ENCODE measurements at regions of chr12 and their contacts with region 1.

Region 1: GRCh38 chr12:69359531-69360347 is at the start of gene YEATS4:
- DNase-seq: peak; percentile 94
- ATAC-seq: peak; percentile 88
- H3K4me3 Mint-ChIP-seq: peak within 1 kb of the TSS; percentile 95
- H3K27ac Mint-ChIP-seq: peak within 1 kb of the TSS; percentile 92
- H3K4me1 Mint-ChIP-seq: peaks cover 33% of the 10 kb centered on the region
- H3K27me3 Mint-ChIP-seq: peaks cover 5% of the 10 kb centered on the region
- total RNA-seq, gene YEATS4: 49.9 to 51.0 TPM

Region 2: DNA sequence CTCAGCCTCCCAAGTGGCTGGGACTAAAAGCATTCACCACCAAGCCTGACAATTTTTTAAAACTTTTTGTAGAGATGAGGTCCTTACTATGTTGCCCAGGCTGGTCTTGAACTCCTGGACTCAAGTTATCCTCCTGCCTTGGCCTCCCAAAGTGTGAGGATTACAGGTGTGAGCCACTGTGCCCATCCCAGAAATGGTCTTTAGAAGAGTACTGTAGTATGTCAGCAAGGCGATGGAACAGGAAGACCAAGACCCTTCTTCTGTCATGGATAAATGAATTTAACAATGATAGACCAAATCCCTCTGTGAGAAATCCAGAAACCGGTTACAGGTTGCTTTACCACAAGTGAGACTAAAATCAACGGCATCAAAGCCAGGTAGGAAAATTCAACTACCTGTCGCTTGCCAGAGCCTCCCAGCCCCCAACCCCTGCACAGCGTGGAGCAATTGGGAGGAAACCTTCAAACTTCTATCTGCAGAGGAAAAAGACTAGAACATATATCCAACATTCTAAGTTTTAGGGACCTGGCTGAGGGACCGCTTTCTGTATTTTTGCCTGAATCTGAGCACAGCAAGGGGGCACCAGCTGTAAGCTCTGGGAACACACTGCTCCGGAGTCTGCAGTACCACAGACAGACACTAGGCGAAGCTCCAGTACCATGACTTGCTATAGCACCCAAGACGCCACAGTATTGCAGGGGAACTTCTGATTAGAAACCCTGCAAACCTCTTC is 69.0 kb before region 1 on chr12:
- CTCF ChIA-PET with region 1: interaction called, 20 read pairs
- POLR2A ChIA-PET with region 1: no interaction called
- DNase-seq: peak; percentile 89
- ATAC-seq: peak; percentile 99
- H3K4me3 Mint-ChIP-seq: no peak overlapping the region
- H3K27ac Mint-ChIP-seq: no peak overlapping the region
- H3K4me1 Mint-ChIP-seq: peaks cover 7% of the 10 kb centered on the region
- H3K27me3 Mint-ChIP-seq: peaks cover 42% of the 10 kb centered on the region

Region 3: DNA sequence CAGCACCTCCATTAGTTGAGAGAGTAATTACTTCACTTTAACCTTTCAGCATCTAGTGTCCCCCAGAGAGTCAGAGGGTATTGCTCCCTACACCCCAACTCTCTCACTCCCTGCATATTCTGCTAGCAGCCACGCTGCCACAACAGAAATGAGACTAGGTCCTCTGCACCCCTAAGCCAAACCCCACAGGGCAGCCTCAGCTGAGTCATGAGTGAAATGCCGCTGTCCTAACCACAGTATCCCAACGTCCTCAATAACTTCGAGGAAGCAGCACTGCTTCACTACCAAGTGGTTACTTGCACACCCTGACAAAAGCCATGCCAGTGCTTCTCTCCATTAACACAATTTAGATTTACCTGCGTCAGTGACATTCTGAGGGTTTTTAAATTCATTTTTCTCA is 18.4 kb before region 1 on chr12:
- CTCF ChIA-PET with region 1: interaction called, 20 read pairs
- POLR2A ChIA-PET with region 1: no interaction called
- DNase-seq: no peak
- ATAC-seq: no peak
- H3K4me3 Mint-ChIP-seq: no peak overlapping the region
- H3K27ac Mint-ChIP-seq: no peak overlapping the region
- H3K4me1 Mint-ChIP-seq: peaks cover 2% of the 10 kb centered on the region
- H3K27me3 Mint-ChIP-seq: peaks cover 12% of the 10 kb centered on the region

Region 4: GRCh38 chr12:69388371-69388770 is 28.6 kb after region 1 on chr12:
- CTCF ChIA-PET with region 1: interaction called, 26 read pairs
- POLR2A ChIA-PET with region 1: no interaction called
- DNase-seq: no peak
- ATAC-seq: no peak
- H3K4me3 Mint-ChIP-seq: no peak overlapping the region
- H3K27ac Mint-ChIP-seq: no peak overlapping the region
- H3K4me1 Mint-ChIP-seq: no peaks in the 10 kb centered on the region
- H3K27me3 Mint-ChIP-seq: no peaks in the 10 kb centered on the region

Region 5: GRCh38 chr12:69570545-69571399 is 211.0 kb after region 1 on chr12:
- CTCF ChIA-PET with region 1: interaction called, 67 read pairs
- POLR2A ChIA-PET with region 1: no interaction called
- DNase-seq: peak; percentile 63
- ATAC-seq: peak; percentile 87
- H3K4me3 Mint-ChIP-seq: no peak overlapping the region
- H3K27ac Mint-ChIP-seq: no peak overlapping the region
- H3K4me1 Mint-ChIP-seq: peaks cover 2% of the 10 kb centered on the region
- H3K27me3 Mint-ChIP-seq: no peaks in the 10 kb centered on the region

Region 6: GRCh38 chr12:69639400-69640016 is 279.8 kb after region 1 on chr12:
- CTCF ChIA-PET with region 1: interaction called, 30 read pairs
- POLR2A ChIA-PET with region 1: no interaction called
- DNase-seq: peak; percentile 71
- ATAC-seq: peak; percentile 79
- H3K4me3 Mint-ChIP-seq: no peak overlapping the region
- H3K27ac Mint-ChIP-seq: no peak overlapping the region
- H3K4me1 Mint-ChIP-seq: peaks cover 3% of the 10 kb centered on the region
- H3K27me3 Mint-ChIP-seq: no peaks in the 10 kb centered on the region